Activated naive CD4-positive, alpha-beta T cell treated with anti-CD3 and anti-CD28 coated beads for 36 hours (primary cell): ENCODE measurements at regions of chr1 and their contacts with region 1.

Region 1: GRCh38 chr1:169630006-169630405 is at the start of gene SELP:
- DNase-seq: no peak
- H3K4me3 Mint-ChIP-seq: no peak within 1 kb of the TSS
- H3K27ac Mint-ChIP-seq: peak within 1 kb of the TSS; percentile 47
- H3K4me1 Mint-ChIP-seq: peaks cover 65% of the 10 kb centered on the region
- H3K27me3 Mint-ChIP-seq: no peaks in the 10 kb centered on the region
- total RNA-seq, gene SELP: 2.4 to 2.6 TPM

Region 2: DNA sequence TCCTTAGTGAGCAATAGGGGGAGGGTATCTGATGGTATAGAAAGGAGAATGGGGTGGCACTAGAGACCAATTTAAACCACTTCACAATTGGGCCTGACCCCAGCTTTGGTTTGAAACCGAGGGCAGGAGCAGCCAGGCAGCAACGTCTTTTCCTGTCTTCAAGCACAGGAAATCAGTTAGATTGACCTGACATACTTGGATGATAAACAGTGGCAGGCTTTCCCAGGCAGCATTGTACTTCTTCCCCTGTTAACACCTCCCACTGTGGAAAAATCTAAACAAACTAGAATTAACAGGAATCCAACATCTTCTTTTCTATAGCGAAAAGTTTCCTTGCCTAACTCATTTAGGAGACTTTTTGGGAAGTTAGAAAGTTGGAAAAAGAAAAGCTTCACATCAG is 40.8 kb after region 1 on chr1:
- CTCF ChIA-PET with region 1: no interaction called
- intact Hi-C with region 1: loop called (anchors 2 kb)
- DNase-seq: no peak
- H3K4me3 Mint-ChIP-seq: no peak overlapping the region
- H3K27ac Mint-ChIP-seq: peak overlapping the region; percentile 62
- H3K4me1 Mint-ChIP-seq: peaks cover 60% of the 10 kb centered on the region
- H3K27me3 Mint-ChIP-seq: no peaks in the 10 kb centered on the region